BJ (cell line): ENCODE measurements at regions of chr5 and their contacts with region 1.

Region 1: GRCh38 chr5:91146905-91147600 is 236.1 kb downstream of the ARRDC3 start:
- DNase-seq: peak; percentile 75
- H3K4me3 ChIP-seq: no peak overlapping the region
- H3K27me3 ChIP-seq: no peaks in the 10 kb centered on the region
- CTCF ChIP-seq: no peak

Region 2: GRCh38 chr5:91170266-91170665 is 23.2 kb after region 1 on chr5:
- CTCF ChIA-PET with region 1: no interaction called
- POLR2A ChIA-PET with region 1: no interaction called
- DNase-seq: no peak
- H3K4me3 ChIP-seq: no peak overlapping the region
- H3K27me3 ChIP-seq: no peaks in the 10 kb centered on the region
- CTCF ChIP-seq: no peak

Region 3: GRCh38 chr5:91280362-91281269 is 133.6 kb after region 1 on chr5:
- CTCF ChIA-PET with region 1: no interaction called
- POLR2A ChIA-PET with region 1: interaction called, 20 read pairs
- DNase-seq: peak; percentile 91
- H3K4me3 ChIP-seq: peak overlapping the region; percentile 30
- H3K27me3 ChIP-seq: no peaks in the 10 kb centered on the region
- CTCF ChIP-seq: 0 out of 2 replicates have a peak, but pooled peaks have one; percentile 11

Region 4: DNA sequence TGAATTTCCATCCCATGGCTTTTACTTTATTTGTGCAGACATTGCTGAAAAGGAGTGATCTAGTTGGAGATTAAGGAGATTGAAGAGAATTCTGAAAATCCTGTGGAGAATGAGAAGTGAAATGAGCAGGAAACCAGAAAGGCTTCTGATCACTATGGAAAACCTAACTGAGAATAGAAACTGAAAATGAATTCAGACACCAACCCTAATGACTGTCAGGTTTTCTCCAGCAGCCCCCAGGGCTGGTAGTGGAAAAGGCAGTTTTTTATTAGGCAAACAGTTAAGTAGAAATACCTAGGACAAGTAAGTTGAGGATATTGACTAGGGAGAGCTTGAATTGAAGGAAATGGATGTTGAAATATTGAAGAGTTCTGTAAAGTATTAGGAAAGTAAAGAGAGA is 250.7 kb after region 1 on chr5:
- CTCF ChIA-PET with region 1: no interaction called
- POLR2A ChIA-PET with region 1: no interaction called
- DNase-seq: no peak
- H3K4me3 ChIP-seq: no peak overlapping the region
- H3K27me3 ChIP-seq: no peaks in the 10 kb centered on the region
- CTCF ChIP-seq: no peak